IMR-90 (cell line): ENCODE measurements at regions of chr1 and their contacts with region 1.

Region 1: DNA sequence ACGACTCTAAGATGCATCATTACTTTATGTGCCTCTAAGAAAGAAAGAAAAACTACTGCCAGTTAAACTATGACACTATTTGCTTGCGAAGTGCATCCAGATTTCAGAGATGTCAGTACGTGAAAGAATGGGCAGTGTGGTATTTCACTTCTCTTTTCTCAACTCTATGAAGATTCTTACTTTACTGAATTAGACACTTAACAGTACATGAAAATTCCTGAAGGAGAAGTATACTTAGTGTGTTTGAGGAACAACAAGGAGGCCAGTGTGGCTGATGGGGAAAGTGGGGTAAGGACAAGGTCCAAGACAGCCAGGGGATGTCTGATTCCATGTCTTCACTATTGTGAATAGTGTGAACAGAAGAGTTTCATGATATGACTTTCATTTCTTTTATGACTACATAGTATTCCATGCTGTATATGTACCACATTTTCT is 53.9 kb upstream of the HSD17B7 start:
- DNase-seq: no peak
- ATAC-seq: no peak
- H3K4me3 ChIP-seq: no peak overlapping the region
- H3K27ac ChIP-seq: no peak overlapping the region
- H3K4me1 ChIP-seq: peaks cover 25% of the 10 kb centered on the region
- H3K27me3 ChIP-seq: no peaks in the 10 kb centered on the region
- CTCF ChIP-seq: no peak
- POLR2A ChIP-seq: no peak
- RAD21 ChIP-seq: no peak

Region 2: DNA sequence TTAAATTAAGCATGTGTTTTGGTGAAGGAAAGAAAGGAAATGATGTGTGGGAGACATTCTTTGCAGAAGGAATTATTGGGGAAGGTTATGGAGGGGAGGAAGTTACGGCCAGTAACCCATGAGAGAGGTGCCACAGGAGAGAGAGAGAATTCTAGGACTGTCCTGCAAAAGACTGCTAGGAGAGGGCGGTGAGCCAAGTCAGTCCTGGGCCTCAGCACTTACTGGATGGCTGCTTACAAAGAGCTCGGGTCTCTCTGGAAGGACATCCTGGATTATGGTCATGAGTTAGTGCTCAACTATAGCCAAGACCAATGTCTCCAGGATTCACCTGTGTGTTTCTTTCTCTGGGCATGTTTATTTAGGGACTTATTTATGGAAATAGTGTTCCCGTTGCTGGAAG is 20.5 kb before region 1 on chr1:
- CTCF ChIA-PET with region 1: no interaction called
- POLR2A ChIA-PET with region 1: no interaction called
- dilution Hi-C with region 1: no loop called
- in situ Hi-C with region 1: no loop called
- intact Hi-C with region 1: loop called (anchors 2 kb)
- DNase-seq: no peak
- ATAC-seq: peak; percentile 10; the same call in 1 of the 2 replicates
- H3K4me3 ChIP-seq: no peak overlapping the region
- H3K27ac ChIP-seq: no peak overlapping the region; the same call in 1 of the 2 replicates
- H3K4me1 ChIP-seq: peaks cover 7% of the 10 kb centered on the region
- H3K27me3 ChIP-seq: no peaks in the 10 kb centered on the region
- CTCF ChIP-seq: no peak
- POLR2A ChIP-seq: no peak
- RAD21 ChIP-seq: no peak